Right cardiac atrium (tissue), 5 donors: ENCODE measurements at regions of chr5 and their contacts with region 1.

Region 1: GRCh38 chr5:25224316-25224982 is 579.7 kb upstream of the CDH10 start:
- DNase-seq: no peak
- ATAC-seq: no peak
- H3K4me3 ChIP-seq: no peak overlapping the region
- H3K27ac ChIP-seq: no peak overlapping the region
- H3K4me1 ChIP-seq: no peaks in the 10 kb centered on the region
- H3K27me3 ChIP-seq: no peaks in the 10 kb centered on the region

Region 2: GRCh38 chr5:25056836-25057235 is 167.6 kb before region 1 on chr5:
- intact Hi-C with region 1: loop called in 1 of 4 experiments (anchors 5 kb)
- DNase-seq: no peak
- ATAC-seq: no peak
- H3K4me3 ChIP-seq: no peak overlapping the region
- H3K27ac ChIP-seq: no peak overlapping the region
- H3K4me1 ChIP-seq: no peaks in the 10 kb centered on the region
- H3K27me3 ChIP-seq: no peaks in the 10 kb centered on the region